Activated CD8-positive, alpha-beta T cell treated with anti-CD3 and anti-CD28 coated beads, Interleukin-2, amount 10 ng/mL, durations not matched to agents 7 days and 5 days (primary cell): ENCODE measurements at regions of chr7 and their contacts with region 1.

Region 1: GRCh38 chr7:7182156-7183060 is at the start of gene C1GALT1:
- DNase-seq: peak; percentile 98
- ATAC-seq: peak; percentile 88
- H3K4me3 Mint-ChIP-seq: peak within 1 kb of the TSS; percentile 87
- H3K27ac Mint-ChIP-seq: peak within 1 kb of the TSS; percentile 98
- H3K4me1 Mint-ChIP-seq: peaks cover 19% of the 10 kb centered on the region
- H3K27me3 Mint-ChIP-seq: no peaks in the 10 kb centered on the region
- total RNA-seq, gene C1GALT1: 47.4 to 50.7 TPM

Region 2: DNA sequence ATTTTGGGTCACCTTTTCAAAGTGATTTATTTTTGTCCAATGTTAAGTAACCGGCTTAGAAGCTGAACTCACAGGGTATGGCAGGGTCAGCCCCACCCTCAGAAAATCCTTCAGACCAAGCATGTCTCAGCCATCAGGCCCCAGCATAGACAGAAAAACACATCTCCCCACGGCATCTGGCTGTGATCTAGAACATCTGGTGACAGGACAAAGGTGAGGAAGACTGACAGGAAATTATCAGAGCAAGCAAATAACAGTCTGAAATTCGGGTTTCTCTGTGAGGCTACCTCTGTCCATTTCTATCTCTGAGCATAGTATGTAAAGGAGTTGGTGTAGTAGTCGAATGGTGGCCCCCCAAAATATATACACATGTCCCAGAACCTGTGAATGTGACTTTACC is 177.1 kb before region 1 on chr7:
- CTCF ChIA-PET with region 1: no interaction called
- POLR2A ChIA-PET with region 1: no interaction called
- DNase-seq: no peak
- ATAC-seq: no peak
- H3K4me3 Mint-ChIP-seq: no peak overlapping the region
- H3K27ac Mint-ChIP-seq: no peak overlapping the region
- H3K4me1 Mint-ChIP-seq: no peaks in the 10 kb centered on the region
- H3K27me3 Mint-ChIP-seq: peaks cover 8% of the 10 kb centered on the region

Region 3: DNA sequence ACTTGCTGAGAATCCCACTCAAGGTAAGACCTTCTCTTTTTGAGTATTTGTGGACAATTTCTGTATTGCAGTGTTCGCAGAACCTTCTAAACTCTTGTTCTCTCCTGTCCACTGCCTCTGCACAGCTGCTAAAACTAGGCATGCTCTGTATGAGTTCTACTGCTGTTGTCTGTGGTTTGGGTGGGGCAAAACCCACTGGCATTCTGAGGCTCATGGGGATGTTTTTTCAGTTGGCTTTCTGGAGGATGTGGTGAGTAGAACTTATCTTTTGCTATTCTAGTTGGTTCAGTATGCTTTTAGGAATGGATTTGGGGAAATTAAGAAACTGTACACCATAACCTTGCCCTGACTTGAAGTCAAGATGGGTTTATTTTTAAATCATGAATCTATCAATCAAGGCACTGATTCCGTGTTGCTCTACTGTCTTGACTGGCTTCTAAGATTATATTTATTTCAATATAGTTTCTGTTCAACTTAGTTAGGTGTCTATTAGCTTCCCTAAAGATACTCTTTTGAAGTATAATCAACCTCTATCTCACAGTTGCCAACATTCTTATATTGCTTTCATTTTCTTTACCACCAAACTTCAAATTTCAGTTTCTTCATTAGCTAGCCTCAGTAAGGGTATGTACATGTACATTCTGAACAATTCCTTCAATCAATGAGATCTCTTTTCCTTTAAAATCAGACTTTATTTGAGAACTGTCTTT is 25.1 kb before region 1 on chr7:
- CTCF ChIA-PET with region 1: interaction called, 29 read pairs
- POLR2A ChIA-PET with region 1: interaction called, 74 read pairs
- DNase-seq: peak; percentile 84
- ATAC-seq: peak; percentile 95
- H3K4me3 Mint-ChIP-seq: peak overlapping the region; percentile 84
- H3K27ac Mint-ChIP-seq: peak overlapping the region; percentile 98
- H3K4me1 Mint-ChIP-seq: peaks cover 48% of the 10 kb centered on the region
- H3K27me3 Mint-ChIP-seq: no peaks in the 10 kb centered on the region

Region 4: GRCh38 chr7:7164591-7164990 is 17.8 kb before region 1 on chr7:
- CTCF ChIA-PET with region 1: interaction called, 29 read pairs
- POLR2A ChIA-PET with region 1: interaction called, 74 read pairs
- DNase-seq: no peak
- ATAC-seq: no peak
- H3K4me3 Mint-ChIP-seq: no peak overlapping the region
- H3K27ac Mint-ChIP-seq: no peak overlapping the region
- H3K4me1 Mint-ChIP-seq: peaks cover 33% of the 10 kb centered on the region
- H3K27me3 Mint-ChIP-seq: no peaks in the 10 kb centered on the region

Region 5: DNA sequence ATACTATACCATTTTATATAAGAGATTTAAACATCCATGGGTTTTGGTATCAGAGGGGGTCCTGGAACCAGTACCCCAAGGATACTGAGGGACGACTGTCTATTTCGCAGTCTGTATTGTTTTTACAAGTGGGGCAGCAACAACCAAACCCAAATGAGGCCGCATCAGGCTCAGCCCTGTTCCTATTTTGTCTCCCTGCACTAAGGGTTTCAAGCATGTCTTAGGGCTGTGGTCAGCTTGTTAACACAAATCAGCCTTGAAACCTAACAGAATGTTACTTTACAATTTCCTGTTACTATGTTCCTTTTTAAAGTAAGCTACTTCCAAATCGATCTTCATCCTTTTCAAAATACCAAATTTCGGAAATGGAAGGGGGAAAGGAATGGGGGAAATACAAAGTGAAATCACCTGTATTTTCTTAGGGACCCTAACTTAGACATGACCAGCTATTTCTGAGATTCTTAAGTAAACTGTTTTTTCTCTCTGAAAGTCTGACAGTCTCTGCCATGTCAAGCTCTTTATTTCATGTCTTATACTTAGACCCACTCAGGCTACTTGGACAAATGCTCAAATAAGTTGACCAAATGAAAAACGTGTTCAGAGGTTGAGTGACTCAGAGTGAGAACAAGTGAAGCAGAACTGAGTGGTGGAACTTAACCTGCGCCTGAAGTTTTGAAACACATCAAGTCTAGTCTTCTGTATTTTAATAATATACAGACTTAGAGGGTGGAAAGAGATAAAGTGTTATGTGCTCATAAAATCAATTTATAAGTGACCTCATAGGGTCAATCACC is 75.7 kb after region 1 on chr7:
- CTCF ChIA-PET with region 1: interaction called, 7 read pairs
- POLR2A ChIA-PET with region 1: interaction called, 26 read pairs
- DNase-seq: peak; percentile 33
- ATAC-seq: peak; percentile 70
- H3K4me3 Mint-ChIP-seq: peak overlapping the region; percentile 59
- H3K27ac Mint-ChIP-seq: peak overlapping the region; percentile 81
- H3K4me1 Mint-ChIP-seq: peaks cover 46% of the 10 kb centered on the region
- H3K27me3 Mint-ChIP-seq: no peaks in the 10 kb centered on the region